ENCODE measurements at regions of chr9 and their contacts with region 1.

Region 1: DNA sequence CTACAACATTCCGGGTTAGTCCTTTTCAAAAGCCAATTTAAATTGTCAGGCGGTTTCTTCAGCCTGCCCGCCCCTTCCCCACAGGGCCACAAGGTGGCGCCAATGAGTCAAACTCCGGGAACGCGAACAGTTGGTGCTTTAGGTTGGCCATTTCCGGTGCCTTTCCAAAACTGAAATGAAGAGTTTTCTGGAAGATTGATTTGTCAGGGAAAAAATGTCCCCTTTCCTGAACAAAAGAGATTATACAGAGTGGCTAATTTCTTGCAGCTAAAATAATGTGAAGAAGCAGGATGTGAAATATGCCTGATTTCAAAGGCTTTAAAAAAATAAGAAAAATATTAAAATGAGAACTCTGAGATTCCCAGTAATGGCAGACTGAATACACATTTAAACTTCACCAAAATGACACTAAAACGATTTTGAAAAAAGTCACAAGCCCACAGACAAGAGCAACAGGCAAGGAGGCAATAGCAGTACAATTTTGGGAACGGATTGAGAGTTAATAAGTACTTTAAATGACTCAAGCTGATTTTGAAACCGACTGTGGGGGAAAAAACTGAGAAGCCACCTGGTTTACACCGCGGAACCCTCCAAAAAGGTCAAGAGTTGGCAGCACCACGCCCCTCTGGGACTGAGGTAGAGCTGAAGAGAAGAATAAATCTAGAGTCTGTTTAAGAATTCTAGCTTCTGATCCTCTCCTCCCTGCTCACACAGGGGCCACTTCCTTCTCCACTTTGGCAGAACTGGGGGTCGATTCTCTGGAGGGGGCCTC is 45.7 kb downstream of the SLC46A2 start:
- DNase-seq: peak; percentile 79 to 82
- ATAC-seq: peak; percentile 45 to 86 (median 76)
- H3K4me3 ChIP-seq: no peak overlapping the region
- H3K27ac ChIP-seq: peak overlapping the region in 1 of 10 donors; percentile 28
- H3K4me1 ChIP-seq: peaks cover 0 to 43% (median 0%) of the 10 kb centered on the region in 9 donors
- H3K27me3 ChIP-seq: no peaks in the 10 kb centered on the region
- CTCF ChIP-seq: peak; percentile 90 to 98 (median 97)

Region 2: DNA sequence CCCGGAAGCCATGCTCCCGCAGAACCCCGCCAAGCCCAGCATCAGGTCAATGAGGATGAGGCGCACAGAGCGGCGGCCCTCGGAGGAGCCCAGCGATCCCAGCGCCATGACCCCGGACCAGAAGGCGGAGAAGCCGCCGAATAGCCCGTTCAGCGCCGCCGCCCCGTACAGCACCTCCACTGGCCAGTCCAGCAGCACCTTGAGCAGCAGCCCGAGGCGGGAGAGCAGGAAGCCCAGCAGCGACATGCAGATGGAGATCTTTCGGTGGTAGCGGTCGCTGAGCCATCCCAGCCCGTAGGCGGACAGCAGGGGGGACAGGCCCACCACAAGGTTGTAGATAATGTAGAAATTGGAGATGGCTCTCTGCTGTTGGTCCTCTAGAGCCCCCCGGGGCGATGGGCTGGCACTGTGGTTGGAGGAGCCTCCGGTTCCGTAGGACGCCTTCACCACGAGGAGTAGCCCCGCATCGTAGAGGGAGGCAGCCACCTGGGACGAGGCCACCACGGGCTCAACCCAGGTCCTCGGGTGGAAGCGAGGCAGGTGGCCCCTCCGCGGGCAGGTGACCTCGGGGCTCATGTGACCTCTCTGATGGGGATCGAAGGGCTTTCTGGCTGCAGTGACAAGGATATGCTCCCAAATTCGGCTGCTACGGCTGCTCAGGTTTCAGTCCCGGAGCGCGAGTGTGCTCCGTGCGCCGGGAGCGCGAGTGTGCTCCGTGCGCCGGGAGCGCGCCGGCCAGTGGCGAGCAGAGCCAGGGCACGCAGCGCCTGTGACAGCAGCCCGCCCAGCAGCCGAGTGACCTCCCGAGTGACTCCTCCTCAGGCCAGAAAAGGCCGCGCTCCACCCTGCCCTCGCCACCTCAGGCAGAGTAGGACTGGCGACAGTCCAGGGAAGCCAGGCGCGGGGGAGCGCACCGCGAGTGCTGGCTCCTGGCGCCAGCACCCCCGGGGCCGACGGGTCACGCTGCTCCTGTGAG is 45.4 kb after region 1 on chr9 and contains the start of gene SLC46A2:
- intact Hi-C with region 1: loop called in 1 of 10 experiments (anchors 10 kb)
- DNase-seq: peak in 1 of 2 donors; percentile 37
- ATAC-seq: peak; percentile 29 to 78 (median 68)
- H3K4me3 ChIP-seq: peak within 1 kb of the TSS in 9 of 10 donors; percentile 30 to 57 (median 47)
- H3K27ac ChIP-seq: peak within 1 kb of the TSS in 1 of 10 donors; percentile 64
- H3K4me1 ChIP-seq: peaks cover 4 to 36% (median 6%) of the 10 kb centered on the region in 9 donors
- H3K27me3 ChIP-seq: peaks cover 0 to 34% (median 15%) of the 10 kb centered on the region in 7 donors
- CTCF ChIP-seq: no peak
- total RNA-seq, gene SLC46A2: 0.15 to 0.42 TPM in 2 of 10 donors, not detected in the others

Region 3: DNA sequence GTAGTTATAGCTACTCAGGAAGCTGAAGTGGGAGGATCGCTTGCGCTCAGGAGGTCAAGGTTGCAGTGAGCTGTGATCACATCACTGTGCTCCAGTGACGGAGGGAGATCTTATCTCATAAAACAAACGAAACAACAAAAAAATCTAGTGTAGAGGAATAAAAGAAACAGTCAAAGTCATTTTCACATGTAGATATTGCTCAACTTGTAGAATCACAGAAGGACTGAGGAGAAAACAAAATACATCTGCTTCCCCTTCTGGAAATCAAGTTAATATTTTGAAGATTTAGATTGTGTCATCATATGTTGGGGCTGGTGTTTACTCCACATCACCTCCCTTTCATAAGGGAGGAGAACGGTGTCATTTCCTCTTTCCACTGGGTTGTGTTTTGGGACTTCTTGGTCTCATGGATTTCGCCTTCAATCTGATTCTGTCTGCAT is 53.9 kb after region 1 on chr9:
- intact Hi-C with region 1: loop called in 8 of 10 experiments (anchors 2 to 10 kb)
- DNase-seq: no peak
- ATAC-seq: no peak
- H3K4me3 ChIP-seq: no peak overlapping the region
- H3K27ac ChIP-seq: peak overlapping the region in 1 of 10 donors; percentile 33
- H3K4me1 ChIP-seq: peaks cover 0 to 44% (median 0%) of the 10 kb centered on the region in 9 donors
- H3K27me3 ChIP-seq: peaks cover 0 to 8% (median 0%) of the 10 kb centered on the region in 7 donors
- CTCF ChIP-seq: no peak

Region 4: DNA sequence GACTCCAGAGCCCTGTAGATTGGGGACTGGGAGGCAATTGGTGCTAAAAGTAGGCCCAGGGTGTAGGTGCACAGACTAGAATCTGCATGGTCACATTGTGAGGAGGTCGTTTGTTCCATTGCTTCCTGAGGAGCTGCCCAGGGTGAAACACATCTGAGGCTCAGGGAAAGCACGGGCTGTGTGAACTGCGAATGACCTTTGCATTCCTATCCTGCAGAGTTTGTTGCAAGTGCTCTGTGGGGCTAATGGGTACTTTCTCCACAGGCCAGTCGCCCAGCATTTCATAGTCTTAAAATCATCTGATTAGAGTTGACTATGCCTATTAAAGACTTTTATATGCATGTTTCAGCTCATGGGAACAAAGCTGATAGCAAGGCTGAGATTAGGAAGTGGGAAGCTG is 60.1 kb after region 1 on chr9:
- intact Hi-C with region 1: loop called in 7 of 10 experiments (anchors 2 to 10 kb)
- DNase-seq: no peak
- ATAC-seq: no peak
- H3K4me3 ChIP-seq: no peak overlapping the region
- H3K27ac ChIP-seq: no peak overlapping the region
- H3K4me1 ChIP-seq: peaks cover 0 to 8% (median 0%) of the 10 kb centered on the region in 9 donors
- H3K27me3 ChIP-seq: peaks cover 0 to 4% (median 0%) of the 10 kb centered on the region in 7 donors
- CTCF ChIP-seq: no peak

Region 5: DNA sequence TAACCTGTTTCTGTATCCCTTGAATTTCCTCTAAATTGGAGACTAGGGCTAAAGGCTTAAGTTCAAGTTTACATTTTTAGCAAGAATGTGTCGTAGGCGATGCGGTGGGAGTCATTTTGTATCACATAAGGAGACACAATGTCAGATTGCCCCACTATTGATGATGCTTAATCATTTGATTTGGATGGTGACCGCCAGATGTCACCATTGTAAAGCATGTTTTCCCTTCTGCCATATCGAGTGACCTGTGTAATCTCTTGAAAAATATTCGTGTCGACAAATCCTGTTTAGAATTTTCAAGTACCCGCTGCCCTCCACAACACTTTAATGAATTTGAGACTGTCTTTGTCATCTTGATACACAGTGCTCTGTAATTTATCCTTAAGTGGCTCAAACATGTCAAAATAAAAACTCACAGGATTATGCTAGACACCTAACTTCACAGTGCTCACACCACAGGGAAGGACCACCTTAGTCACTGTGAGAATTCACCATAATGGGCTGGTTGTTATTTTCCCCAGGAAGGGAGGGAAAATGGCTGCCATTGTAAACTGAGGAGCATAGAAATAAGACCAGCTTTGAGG is 80.2 kb after region 1 on chr9:
- intact Hi-C with region 1: no loop called
- DNase-seq: no peak
- ATAC-seq: no peak
- H3K4me3 ChIP-seq: no peak overlapping the region
- H3K27ac ChIP-seq: no peak overlapping the region
- H3K4me1 ChIP-seq: no peaks in the 10 kb centered on the region
- H3K27me3 ChIP-seq: peaks cover 0 to 13% (median 4%) of the 10 kb centered on the region in 7 donors
- CTCF ChIP-seq: peak in 7 of 9 donors; percentile 18 to 59 (median 45)